Heart right ventricle (tissue), 16 donors: ENCODE measurements at regions of chr3 and their contacts with region 1.

Region 1: GRCh38 chr3:184417619-184418327 is 37.9 kb downstream of the CHRD start:
- DNase-seq: peak; percentile 60 to 71
- ATAC-seq: peak; percentile 71 to 91 (median 89)
- H3K4me3 ChIP-seq: no peak overlapping the region
- H3K27ac ChIP-seq: no peak overlapping the region
- H3K4me1 ChIP-seq: no peaks in the 10 kb centered on the region
- H3K27me3 ChIP-seq: no peaks in the 10 kb centered on the region
- CTCF ChIP-seq: peak; percentile 60 to 89 (median 80)

Region 2: GRCh38 chr3:184469423-184469822 is 51.6 kb after region 1 on chr3:
- intact Hi-C with region 1: loop called in 1 of 10 experiments (anchors 5 kb)
- DNase-seq: no peak
- ATAC-seq: no peak
- H3K4me3 ChIP-seq: no peak overlapping the region
- H3K27ac ChIP-seq: no peak overlapping the region
- H3K4me1 ChIP-seq: peaks cover 6 to 40% (median 14%) of the 10 kb centered on the region in 9 donors
- H3K27me3 ChIP-seq: peaks cover 0 to 14% (median 0%) of the 10 kb centered on the region in 7 donors
- CTCF ChIP-seq: peak in 6 of 9 donors; percentile 25 to 50 (median 32)

Region 3: GRCh38 chr3:184513276-184514170 is 95.8 kb after region 1 on chr3:
- intact Hi-C with region 1: loop called in 9 of 10 experiments (anchors 1 to 10 kb)
- DNase-seq: peak; percentile 85 to 88
- ATAC-seq: peak; percentile 96 to 100 (median 98)
- H3K4me3 ChIP-seq: peak overlapping the region in 9 of 10 donors; percentile 22 to 57 (median 52)
- H3K27ac ChIP-seq: peak overlapping the region in 6 of 10 donors; percentile 29 to 69 (median 54)
- H3K4me1 ChIP-seq: peaks cover 0 to 23% (median 10%) of the 10 kb centered on the region in 9 donors
- H3K27me3 ChIP-seq: peaks cover 0 to 68% (median 51%) of the 10 kb centered on the region in 7 donors
- CTCF ChIP-seq: peak; percentile 78 to 94 (median 87)

Region 4: GRCh38 chr3:184543843-184544512 is 126.2 kb after region 1 on chr3:
- intact Hi-C with region 1: loop called in 3 of 10 experiments (anchors 1 to 5 kb)
- DNase-seq: peak in 1 of 2 donors; percentile 81
- ATAC-seq: peak; percentile 61 to 77 (median 72)
- H3K4me3 ChIP-seq: no peak overlapping the region
- H3K27ac ChIP-seq: no peak overlapping the region
- H3K4me1 ChIP-seq: peaks cover 0 to 12% (median 3%) of the 10 kb centered on the region in 9 donors
- H3K27me3 ChIP-seq: peaks cover 0 to 45% (median 35%) of the 10 kb centered on the region in 7 donors
- CTCF ChIP-seq: peak; percentile 85 to 97 (median 92)